ENCODE measurements at regions of chr2 and their contacts with region 1.

Region 1: DNA sequence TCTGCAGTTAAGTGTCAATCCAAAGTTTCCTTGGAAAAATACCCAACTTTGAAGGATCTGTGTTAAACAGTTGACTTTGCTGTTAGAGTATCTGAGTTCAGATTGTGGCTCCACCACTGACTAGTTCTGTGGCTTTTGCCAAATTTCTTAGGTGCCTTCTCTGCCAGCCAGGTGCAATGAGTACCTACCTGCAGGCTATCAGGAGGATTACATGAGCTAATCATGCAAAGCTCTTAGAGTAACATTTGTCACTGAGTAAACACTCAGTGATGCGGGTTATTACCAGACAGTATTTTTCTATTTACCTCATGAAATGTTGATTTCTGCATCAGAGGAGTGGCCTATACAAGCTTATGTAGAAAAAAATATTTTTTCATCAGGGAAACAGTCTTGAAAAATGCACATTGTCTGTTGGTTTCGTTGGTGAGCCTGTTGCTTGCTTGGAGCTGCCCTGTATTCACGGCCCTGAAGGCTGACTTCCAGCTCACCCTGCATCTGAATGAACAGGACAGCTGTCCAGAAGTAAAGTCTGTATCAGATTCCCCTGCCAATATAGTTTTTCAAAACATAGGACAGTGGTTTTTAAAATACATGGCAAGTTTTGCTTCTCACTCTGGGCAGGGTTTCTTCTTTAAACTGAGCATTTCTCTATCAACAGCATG is 235.1 kb downstream of the CDCA7 start:
- DNase-seq: peak; percentile 29
- H3K4me3 Mint-ChIP-seq: peak overlapping the region; percentile 33
- H3K27ac Mint-ChIP-seq: peak overlapping the region; percentile 71
- H3K4me1 Mint-ChIP-seq: peaks cover 40% of the 10 kb centered on the region
- H3K27me3 Mint-ChIP-seq: no peaks in the 10 kb centered on the region
- CTCF ChIP-seq: no peak

Region 2: GRCh38 chr2:173657996-173658717 is 68.4 kb after region 1 on chr2:
- CTCF ChIA-PET with region 1: no interaction called
- intact Hi-C with region 1: loop called (anchors 5 kb)
- DNase-seq: peak; percentile 28
- H3K4me3 Mint-ChIP-seq: no peak overlapping the region
- H3K27ac Mint-ChIP-seq: no peak overlapping the region
- H3K4me1 Mint-ChIP-seq: peaks cover 14% of the 10 kb centered on the region
- H3K27me3 Mint-ChIP-seq: no peaks in the 10 kb centered on the region
- CTCF ChIP-seq: no peak